Right ventricle myocardium inferior (tissue), 1 donor: ENCODE measurements at regions of chrX and their contacts with region 1.

Region 1: DNA sequence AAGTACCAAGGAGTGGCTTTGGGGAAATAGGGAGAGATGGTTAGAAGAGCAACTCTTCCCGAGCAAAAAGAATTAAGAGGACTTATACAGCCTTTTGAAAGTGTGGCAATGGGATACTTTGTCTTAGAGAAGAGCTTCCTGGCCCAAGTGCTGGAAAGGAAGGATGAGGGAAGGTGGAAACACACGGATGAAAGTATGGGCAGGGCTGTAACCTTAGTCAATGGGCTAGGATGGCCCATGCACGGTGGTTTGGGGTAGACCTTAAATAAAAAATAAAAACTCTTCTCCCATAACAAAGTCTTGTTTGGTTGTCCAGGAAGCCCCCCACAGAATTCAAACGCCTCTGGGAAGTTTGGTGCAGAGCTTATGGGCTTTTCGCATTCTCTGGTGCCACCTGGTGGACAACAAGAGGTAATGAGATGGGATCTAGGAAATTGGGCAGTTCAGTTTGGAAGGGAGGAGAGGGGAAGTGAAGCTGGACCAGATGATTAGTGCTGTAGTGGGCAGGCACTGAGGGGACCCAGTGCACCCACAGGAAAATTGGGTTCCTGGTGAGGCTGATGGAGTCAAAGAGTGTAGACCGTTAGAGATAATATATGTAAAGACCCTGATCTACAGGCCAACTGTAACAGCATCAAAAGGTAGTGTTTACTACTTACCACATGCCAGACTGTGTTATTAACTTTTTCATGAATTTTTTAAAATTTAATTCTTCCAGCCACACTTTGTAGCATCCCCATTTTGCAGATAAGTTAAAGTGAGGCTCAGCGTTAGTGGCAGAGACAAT is 13.8 kb upstream of the ENOX2 start:
- DNase-seq: no peak
- ATAC-seq: no peak

Region 2: DNA sequence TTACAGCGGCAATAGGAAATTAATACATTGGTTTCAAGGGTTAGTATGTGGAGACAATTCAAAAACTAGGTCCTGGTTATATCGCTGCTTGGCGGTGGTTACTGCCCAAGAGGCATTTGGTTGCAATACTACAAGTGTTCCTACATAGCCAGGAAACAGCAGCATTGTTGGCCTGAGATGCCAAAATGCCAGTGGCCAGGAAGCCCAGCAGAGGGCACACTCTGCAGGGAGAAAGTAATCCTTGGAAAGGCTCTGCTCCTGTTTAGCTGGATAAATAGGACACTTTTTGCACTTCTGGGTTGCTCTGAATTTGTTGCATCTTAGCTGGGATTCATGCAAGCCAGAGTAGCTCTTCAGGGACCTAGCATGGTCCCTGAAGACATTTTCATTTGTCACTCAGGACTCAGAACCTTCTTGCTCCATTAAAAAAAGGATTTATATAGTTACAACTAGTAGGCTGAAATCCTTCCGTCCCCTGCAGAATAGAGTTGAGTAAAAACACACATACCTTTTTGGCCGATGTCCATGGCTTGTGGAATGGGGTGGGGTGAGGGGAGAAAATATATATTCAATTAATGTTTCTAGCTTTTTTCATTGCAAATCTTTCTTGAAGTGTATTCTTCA is 523.3 kb before region 1 on chrX:
- intact Hi-C with region 1: loop called (anchors 5 kb)
- DNase-seq: no peak
- ATAC-seq: no peak

Region 3: GRCh38 chrX:130539721-130540321 is 377.0 kb before region 1 on chrX:
- intact Hi-C with region 1: loop called (anchors 2 kb)
- DNase-seq: no peak
- ATAC-seq: no peak

Region 4: GRCh38 chrX:130575831-130576389 is 340.9 kb before region 1 on chrX:
- intact Hi-C with region 1: loop called (anchors 5 kb)
- DNase-seq: no peak
- ATAC-seq: no peak

Region 5: GRCh38 chrX:130788786-130789581 is 127.8 kb before region 1 on chrX:
- intact Hi-C with region 1: no loop called
- DNase-seq: no peak
- ATAC-seq: no peak